ENCODE measurements at regions of chr1 and their contacts with region 1.

Region 1: DNA sequence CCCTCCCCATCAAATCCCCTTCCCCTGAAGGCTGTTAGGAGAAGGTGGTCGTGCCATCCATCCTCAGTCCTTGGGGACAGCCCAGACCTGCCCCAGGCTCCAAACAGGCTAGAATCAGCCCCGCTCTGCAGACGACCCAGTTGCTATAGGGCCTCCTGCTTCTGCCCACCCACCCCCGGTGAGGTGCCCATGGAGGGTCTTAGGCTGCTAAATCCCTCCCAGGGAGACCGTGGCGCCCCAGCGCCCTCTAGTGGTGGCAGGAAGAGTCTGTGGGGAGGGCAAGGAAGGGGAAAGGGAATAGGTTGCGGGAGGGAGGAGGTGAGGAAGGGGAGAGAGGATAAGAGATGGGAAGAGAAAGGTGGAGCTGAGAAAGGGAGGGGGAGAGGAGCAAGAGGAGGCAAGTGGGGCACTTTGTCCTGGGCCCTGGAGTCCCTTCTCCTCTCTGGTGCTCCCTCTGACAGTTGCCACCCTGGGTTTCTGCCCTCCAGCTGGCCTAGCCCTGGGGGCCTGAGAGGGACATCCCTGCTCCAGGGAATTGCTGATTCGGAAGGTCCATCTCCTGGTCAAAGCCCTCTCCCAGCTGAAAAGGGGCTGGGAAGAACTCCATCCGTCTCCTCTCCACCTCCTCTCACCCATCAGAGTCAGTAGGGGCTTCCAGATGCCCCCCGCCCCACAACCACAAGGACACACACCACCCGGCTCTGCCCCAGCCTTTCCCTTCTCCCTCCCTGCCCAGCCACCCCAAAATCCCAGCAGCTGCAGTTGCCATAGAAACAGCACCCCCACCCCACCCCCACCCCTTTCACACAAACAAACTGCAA is 55.4 kb downstream of the CAMK2N1 start:
- DNase-seq: peak in 1 of 2 experiments; percentile 51
- H3K4me3 ChIP-seq: no peak overlapping the region
- H3K4me3 Mint-ChIP-seq: no peak overlapping the region
- H3K27ac Mint-ChIP-seq: no peak overlapping the region
- H3K4me1 ChIP-seq: no peaks in the 10 kb centered on the region
- H3K4me1 Mint-ChIP-seq: no peaks in the 10 kb centered on the region
- H3K27me3 ChIP-seq: no peaks in the 10 kb centered on the region
- H3K27me3 Mint-ChIP-seq: peaks cover 3% of the 10 kb centered on the region
- CTCF ChIP-seq: peak; percentile 47 to 66

Region 2: GRCh38 chr1:20212685-20213331 is 217.8 kb before region 1 on chr1:
- CTCF ChIA-PET with region 1: no interaction called
- POLR2A ChIA-PET with region 1: no interaction called
- intact Hi-C with region 1: loop called (anchors 2 kb)
- DNase-seq: peak; percentile 70 to 73
- H3K4me3 ChIP-seq: no peak overlapping the region
- H3K4me3 Mint-ChIP-seq: no peak overlapping the region
- H3K27ac Mint-ChIP-seq: no peak overlapping the region
- H3K4me1 ChIP-seq: no peaks in the 10 kb centered on the region
- H3K4me1 Mint-ChIP-seq: no peaks in the 10 kb centered on the region
- H3K27me3 ChIP-seq: no peaks in the 10 kb centered on the region; the same call in 1 of the 2 replicates
- H3K27me3 Mint-ChIP-seq: peaks cover 13% of the 10 kb centered on the region
- CTCF ChIP-seq: peak; percentile 52 to 74

Region 3: GRCh38 chr1:20361806-20362640 is 68.5 kb before region 1 on chr1:
- CTCF ChIA-PET with region 1: no interaction called
- POLR2A ChIA-PET with region 1: no interaction called
- intact Hi-C with region 1: loop called (anchors 10 kb)
- DNase-seq: peak; percentile 60 to 74
- H3K4me3 ChIP-seq: no peak overlapping the region
- H3K4me3 Mint-ChIP-seq: no peak overlapping the region
- H3K27ac Mint-ChIP-seq: no peak overlapping the region
- H3K4me1 ChIP-seq: no peaks in the 10 kb centered on the region
- H3K4me1 Mint-ChIP-seq: no peaks in the 10 kb centered on the region
- H3K27me3 ChIP-seq: no peaks in the 10 kb centered on the region; the same call in 1 of the 2 replicates
- H3K27me3 Mint-ChIP-seq: peaks cover 8% of the 10 kb centered on the region
- CTCF ChIP-seq: peak; percentile 63 to 79

Measured in Caco-2 (cell line).